ENCODE measurements at regions of chr2 and their contacts with region 1.

Region 1: GRCh38 chr2:20642055-20642971 is 8.6 kb downstream of the HS1BP3 start:
- DNase-seq: peak; percentile 99
- H3K4me3 ChIP-seq: no peak overlapping the region; a peak in 1 of 4 replicates
- H3K27ac ChIP-seq: no peak overlapping the region
- H3K4me1 ChIP-seq: peaks cover 13 to 18% of the 10 kb centered on the region in 2 experiments; a peak in 3 of 4 replicates
- H3K27me3 ChIP-seq: no peaks in the 10 kb centered on the region
- CTCF ChIP-seq: peak; percentile 98
- EP300 ChIP-seq: no peak
- RAD21 ChIP-seq: peak; percentile 96

Region 2: DNA sequence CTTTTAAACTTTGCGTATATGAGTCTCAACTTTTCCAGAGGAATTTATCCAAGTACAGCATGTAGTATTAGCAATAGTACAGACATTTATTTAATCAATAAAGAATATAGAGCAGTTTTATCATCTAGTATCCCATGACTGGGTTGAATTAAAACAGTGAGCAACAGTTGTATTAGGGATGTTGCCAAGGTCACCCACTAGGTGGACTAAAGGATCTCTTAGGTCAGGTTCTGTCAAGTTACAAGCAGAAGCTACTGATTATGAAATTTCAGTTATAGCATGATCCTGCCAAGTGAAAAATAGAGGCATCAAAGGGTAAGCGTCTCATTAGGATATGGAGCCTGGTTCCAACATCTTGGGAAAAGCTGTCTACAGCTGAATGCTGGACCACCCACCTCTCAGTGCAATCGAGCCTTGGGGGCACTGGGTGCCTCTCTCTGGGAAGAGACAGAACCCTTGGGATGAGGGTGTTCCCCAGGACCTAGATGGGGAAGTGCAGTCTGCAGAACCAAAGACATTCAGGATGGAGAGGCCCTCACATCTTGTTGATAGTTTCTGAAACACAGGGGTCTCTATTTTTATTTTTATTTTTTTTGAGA is 538.7 kb before region 1 on chr2:
- CTCF ChIA-PET with region 1: no interaction called
- POLR2A ChIA-PET with region 1: no interaction called
- DNase-seq: no peak
- H3K4me3 ChIP-seq: no peak overlapping the region
- H3K27ac ChIP-seq: no peak overlapping the region
- H3K4me1 ChIP-seq: no peaks in the 10 kb centered on the region
- H3K27me3 ChIP-seq: no peaks in the 10 kb centered on the region
- CTCF ChIP-seq: peak; percentile 58
- EP300 ChIP-seq: no peak
- RAD21 ChIP-seq: peak; percentile 85

Region 3: DNA sequence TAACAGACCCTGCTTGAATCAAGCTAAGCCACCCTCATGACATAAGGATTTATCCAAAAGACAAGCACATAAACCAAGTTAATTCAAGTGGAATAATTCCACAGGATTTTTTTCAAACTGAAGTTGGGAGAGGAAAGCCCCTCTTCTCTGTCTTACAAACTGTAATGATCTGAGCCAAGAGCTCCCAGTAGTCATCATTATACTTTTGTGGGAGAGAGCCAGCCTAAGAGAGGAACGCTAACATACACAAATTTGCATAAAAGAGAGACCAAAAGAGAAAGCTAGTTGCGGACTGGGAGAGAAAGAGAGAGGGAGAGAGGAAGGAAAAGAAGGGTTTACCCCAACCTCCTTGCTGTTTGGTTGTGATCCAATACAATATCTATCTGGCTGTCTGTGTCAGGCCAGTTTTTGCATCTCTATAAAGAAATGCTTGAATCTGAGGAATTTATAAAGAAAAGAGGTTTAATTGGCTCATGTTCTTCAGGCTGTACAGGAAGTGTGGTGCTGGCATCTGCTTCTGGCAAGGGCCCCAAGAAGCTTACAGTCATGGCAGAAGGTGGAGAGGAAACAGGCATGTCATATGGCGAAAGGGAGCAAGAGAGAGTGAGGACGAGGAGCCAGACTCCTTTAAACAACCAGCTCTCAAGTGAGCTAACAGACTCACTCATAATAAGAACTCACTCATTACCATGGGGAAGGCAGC is 270.8 kb before region 1 on chr2:
- CTCF ChIA-PET with region 1: interaction called, 151 read pairs
- POLR2A ChIA-PET with region 1: no interaction called
- DNase-seq: no peak
- H3K4me3 ChIP-seq: no peak overlapping the region
- H3K27ac ChIP-seq: no peak overlapping the region
- H3K4me1 ChIP-seq: no peaks in the 10 kb centered on the region; a peak in 1 of 4 replicates
- H3K27me3 ChIP-seq: no peaks in the 10 kb centered on the region; the same call in 1 of the 2 replicates
- CTCF ChIP-seq: no peak
- EP300 ChIP-seq: no peak
- RAD21 ChIP-seq: no peak

Region 4: GRCh38 chr2:20391951-20392699 is 250.2 kb before region 1 on chr2:
- CTCF ChIA-PET with region 1: interaction called, 42 read pairs
- POLR2A ChIA-PET with region 1: no interaction called
- DNase-seq: no peak
- H3K4me3 ChIP-seq: no peak overlapping the region
- H3K27ac ChIP-seq: no peak overlapping the region
- H3K4me1 ChIP-seq: peaks cover 0 to 26% of the 10 kb centered on the region in 2 experiments; a peak in 2 of 4 replicates
- H3K27me3 ChIP-seq: peaks cover 9% of the 10 kb centered on the region; the same call in 1 of the 2 replicates
- CTCF ChIP-seq: no peak
- EP300 ChIP-seq: no peak
- RAD21 ChIP-seq: no peak

Region 5: DNA sequence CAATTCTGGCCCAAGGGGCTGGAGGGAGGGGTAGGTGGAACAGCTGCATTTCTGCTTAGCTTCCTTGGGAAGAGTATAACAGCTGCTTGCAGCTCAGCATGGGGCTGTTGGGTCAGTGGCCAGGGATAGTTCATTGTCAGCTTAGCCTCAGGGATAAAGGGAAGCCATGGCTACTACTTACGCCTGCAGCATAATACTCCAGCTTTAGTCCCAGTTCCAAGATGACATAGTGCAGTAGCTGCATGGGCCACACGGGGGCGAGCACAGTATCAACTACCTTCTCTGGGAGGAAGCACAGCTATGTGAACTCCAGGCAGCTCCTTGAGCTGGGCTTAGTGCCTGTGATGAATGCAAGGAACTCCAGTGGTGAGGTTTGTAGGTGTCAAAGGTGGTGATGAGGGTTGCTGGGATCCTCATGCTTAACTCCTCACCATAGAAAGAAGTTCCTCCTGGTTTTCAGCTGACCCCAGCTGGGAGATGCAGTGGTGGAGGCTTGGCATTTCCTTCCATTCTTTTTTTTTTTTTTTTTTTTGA is 230.9 kb before region 1 on chr2:
- CTCF ChIA-PET with region 1: interaction called, 120 read pairs
- POLR2A ChIA-PET with region 1: interaction called, 3 read pairs
- DNase-seq: peak; percentile 77
- H3K4me3 ChIP-seq: no peak overlapping the region
- H3K27ac ChIP-seq: no peak overlapping the region
- H3K4me1 ChIP-seq: no peaks in the 10 kb centered on the region
- H3K27me3 ChIP-seq: peaks cover 9% of the 10 kb centered on the region; the same call in 1 of the 2 replicates
- CTCF ChIP-seq: peak; percentile 87
- EP300 ChIP-seq: no peak
- RAD21 ChIP-seq: peak; percentile 70

Region 6: DNA sequence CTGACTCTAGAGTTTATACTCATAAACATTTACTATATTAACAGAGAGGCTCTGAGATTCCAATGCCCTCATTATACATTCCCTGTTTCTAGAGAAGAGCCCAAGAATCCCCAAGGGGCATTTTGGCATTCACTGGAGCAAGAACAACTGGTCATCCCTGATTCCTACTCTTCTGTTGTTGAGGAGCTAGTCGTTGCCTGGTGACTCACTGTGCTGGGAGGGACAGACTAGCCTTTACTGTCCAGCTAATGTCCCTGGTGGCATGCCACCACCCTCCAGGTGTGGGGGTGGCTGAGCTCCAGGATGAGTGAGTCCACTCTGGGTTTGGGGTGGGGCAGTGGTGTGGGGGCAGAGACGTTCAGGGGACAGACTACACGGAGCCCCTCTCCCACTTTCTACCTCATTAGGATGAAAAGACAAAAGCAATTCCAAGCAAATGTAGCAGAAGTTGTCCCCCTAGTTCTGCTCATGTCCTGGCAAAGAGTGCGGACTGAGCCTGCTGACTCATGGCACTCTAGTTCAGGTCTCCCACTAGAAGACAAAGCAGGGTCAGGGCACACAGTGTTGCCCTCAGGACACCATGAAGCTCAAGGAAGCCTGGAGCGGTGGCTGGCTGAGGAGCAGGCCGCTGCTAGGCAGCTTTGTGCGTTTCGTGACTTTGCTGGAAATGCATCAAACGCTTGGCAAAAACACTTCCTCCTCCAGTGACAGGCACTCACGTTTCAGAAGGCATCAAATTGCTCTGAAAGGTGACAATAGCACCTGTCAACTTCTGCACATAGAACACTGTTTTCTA is 146.0 kb before region 1 on chr2:
- CTCF ChIA-PET with region 1: interaction called, 10 read pairs
- POLR2A ChIA-PET with region 1: no interaction called
- DNase-seq: no peak
- H3K4me3 ChIP-seq: no peak overlapping the region
- H3K27ac ChIP-seq: no peak overlapping the region
- H3K4me1 ChIP-seq: peaks cover 19 to 25% of the 10 kb centered on the region in 2 experiments
- H3K27me3 ChIP-seq: no peaks in the 10 kb centered on the region
- CTCF ChIP-seq: no peak
- EP300 ChIP-seq: no peak
- RAD21 ChIP-seq: no peak

Region 7: GRCh38 chr2:20617892-20618467 is 24.3 kb before region 1 on chr2:
- CTCF ChIA-PET with region 1: interaction called, 27 read pairs
- POLR2A ChIA-PET with region 1: no interaction called
- DNase-seq: peak; percentile 82
- H3K4me3 ChIP-seq: no peak overlapping the region
- H3K27ac ChIP-seq: peak overlapping the region; percentile 67 to 90
- H3K4me1 ChIP-seq: peaks cover 18 to 42% of the 10 kb centered on the region in 2 experiments; a peak in 3 of 4 replicates
- H3K27me3 ChIP-seq: no peaks in the 10 kb centered on the region
- CTCF ChIP-seq: peak; percentile 56
- EP300 ChIP-seq: no peak; a peak in 1 of 4 replicates
- RAD21 ChIP-seq: peak; percentile 23; the same call in 1 of the 2 replicates

Region 8: DNA sequence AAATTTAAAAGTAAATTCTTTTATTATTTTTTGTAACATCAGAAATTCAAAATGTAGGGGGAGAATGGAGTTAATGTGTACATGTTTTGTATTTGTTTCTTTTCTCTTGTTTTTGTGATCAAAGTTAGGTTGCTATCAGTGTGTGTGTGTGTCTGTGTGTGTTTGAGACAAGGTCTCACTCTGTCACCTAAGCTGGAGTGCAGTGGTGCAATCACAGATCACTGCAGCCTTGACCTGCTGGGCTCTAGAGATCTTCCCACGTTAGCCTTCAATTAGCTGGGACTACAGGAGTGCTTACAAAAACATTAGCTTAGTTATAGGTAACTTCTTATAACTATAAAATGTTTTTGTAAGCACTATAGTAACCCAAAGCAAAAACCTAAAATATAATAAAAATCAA is 75.3 kb after region 1 on chr2:
- CTCF ChIA-PET with region 1: no interaction called
- POLR2A ChIA-PET with region 1: no interaction called
- DNase-seq: no peak
- H3K4me3 ChIP-seq: no peak overlapping the region
- H3K27ac ChIP-seq: no peak overlapping the region
- H3K4me1 ChIP-seq: no peaks in the 10 kb centered on the region
- H3K27me3 ChIP-seq: no peaks in the 10 kb centered on the region
- CTCF ChIP-seq: no peak
- EP300 ChIP-seq: no peak
- RAD21 ChIP-seq: no peak

Region 9: DNA sequence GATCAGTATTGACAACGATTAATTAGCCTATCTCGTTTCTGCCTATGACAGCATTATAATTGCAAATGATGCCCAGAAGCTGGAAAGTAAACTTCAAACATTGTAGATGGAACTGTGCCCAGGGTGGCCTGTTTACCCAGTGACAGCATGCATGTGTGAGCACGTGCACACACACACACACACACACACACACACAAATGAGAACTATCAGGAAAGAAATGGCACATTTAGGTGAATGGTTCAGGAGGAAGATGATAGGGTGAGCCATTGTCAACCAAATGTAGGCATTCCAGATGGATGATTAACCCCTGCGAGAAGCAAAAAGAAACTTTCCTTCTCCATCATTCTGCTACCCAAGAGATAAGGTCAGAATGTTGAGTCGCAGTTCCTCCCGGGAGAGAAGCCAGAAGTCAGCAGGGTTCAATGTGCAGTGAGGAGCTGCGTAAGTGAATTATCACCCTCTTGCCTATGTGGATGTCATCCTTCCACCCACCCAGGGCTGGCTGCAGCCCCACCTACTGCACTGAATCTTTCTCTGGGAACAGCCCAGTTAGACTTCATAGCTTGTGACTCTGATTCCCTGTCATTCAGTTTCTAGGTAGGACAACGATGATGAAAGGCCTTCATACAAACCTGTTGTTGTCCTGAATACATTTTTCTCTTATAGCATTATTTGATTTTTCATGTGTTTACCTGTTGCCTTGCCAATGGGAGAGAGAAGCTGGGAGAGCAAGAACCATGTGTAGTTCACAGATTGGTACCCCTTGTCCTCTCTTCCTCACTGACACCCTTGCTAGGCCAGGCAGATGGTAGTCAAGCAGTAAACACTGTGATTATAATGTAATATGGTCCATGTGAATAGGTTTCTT is 405.1 kb after region 1 on chr2:
- CTCF ChIA-PET with region 1: no interaction called
- POLR2A ChIA-PET with region 1: no interaction called
- DNase-seq: peak; percentile 36
- H3K4me3 ChIP-seq: no peak overlapping the region
- H3K27ac ChIP-seq: no peak overlapping the region
- H3K4me1 ChIP-seq: peaks cover 0 to 16% of the 10 kb centered on the region in 2 experiments; a peak in 2 of 4 replicates
- H3K27me3 ChIP-seq: no peaks in the 10 kb centered on the region
- CTCF ChIP-seq: no peak
- EP300 ChIP-seq: no peak; a peak in 1 of 4 replicates
- RAD21 ChIP-seq: no peak